ENCODE measurements at regions of chr1 and their contacts with region 1.

Region 1: GRCh38 chr1:17244816-17245740 is 3.8 kb upstream of the PADI3 start:
- DNase-seq: peak in 4 of 5 donors; percentile 87 to 93 (median 90)
- H3K4me3 ChIP-seq: no peak overlapping the region
- H3K27ac ChIP-seq: no peak overlapping the region
- H3K4me1 ChIP-seq: no peaks in the 10 kb centered on the region
- H3K27me3 ChIP-seq: peaks cover 7% of the 10 kb centered on the region
- CTCF ChIP-seq: no peak

Region 2: GRCh38 chr1:17089506-17089905 is 155.6 kb before region 1 on chr1:
- intact Hi-C with region 1: no loop called
- DNase-seq: no peak
- H3K4me3 ChIP-seq: no peak overlapping the region
- H3K27ac ChIP-seq: no peak overlapping the region
- H3K4me1 ChIP-seq: no peaks in the 10 kb centered on the region
- H3K27me3 ChIP-seq: no peaks in the 10 kb centered on the region
- CTCF ChIP-seq: no peak

Region 3: DNA sequence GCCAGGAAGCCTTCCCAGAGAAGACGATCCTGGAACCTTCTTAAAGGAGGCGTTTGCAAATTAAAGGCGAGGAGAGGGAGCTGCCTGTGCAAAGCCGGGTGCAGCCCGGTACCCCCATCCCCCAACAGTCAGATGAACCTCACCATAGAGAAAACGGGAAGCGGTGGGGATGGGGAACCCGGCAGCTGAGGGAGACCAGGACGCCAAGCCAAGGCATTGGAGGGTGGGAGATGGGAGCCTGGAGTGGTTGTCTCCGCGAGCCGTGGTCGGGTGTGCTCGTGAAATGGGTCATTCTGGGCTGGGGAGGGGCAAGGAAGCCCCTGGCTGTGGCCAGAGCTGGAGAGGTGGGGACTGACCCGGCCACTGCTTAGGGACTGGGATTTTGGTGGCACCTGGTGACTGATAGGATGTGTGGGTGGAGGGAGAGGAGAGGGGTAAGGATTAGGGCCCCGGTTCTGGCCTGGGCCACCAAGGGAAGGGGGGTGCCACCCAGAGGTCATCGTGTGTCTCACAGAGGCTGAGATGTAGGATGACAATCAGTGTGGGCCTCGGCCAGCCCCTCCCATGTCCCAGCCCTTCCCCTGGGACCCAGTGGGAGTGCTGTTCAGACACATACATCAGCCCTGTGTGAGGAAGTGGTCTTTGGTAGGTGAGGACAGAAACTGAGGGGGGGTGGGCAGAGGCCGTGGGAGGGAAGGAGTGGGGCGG is 125.2 kb before region 1 on chr1:
- intact Hi-C with region 1: loop called (anchors 5 kb)
- DNase-seq: peak in 1 of 5 donors; percentile 11
- H3K4me3 ChIP-seq: peak overlapping the region in 1 of 3 donors; percentile 55
- H3K27ac ChIP-seq: no peak overlapping the region
- H3K4me1 ChIP-seq: peaks cover 0 to 5% (median 0%) of the 10 kb centered on the region in 3 donors
- H3K27me3 ChIP-seq: peaks cover 14% of the 10 kb centered on the region
- CTCF ChIP-seq: no peak

Region 4: GRCh38 chr1:17485280-17485679 is 240.2 kb after region 1 on chr1:
- intact Hi-C with region 1: no loop called
- DNase-seq: no peak
- H3K4me3 ChIP-seq: no peak overlapping the region
- H3K27ac ChIP-seq: no peak overlapping the region
- H3K4me1 ChIP-seq: no peaks in the 10 kb centered on the region
- H3K27me3 ChIP-seq: no peaks in the 10 kb centered on the region
- CTCF ChIP-seq: peak; percentile 57